Heart left ventricle (tissue), 16 donors: ENCODE measurements at regions of chr10 and their contacts with region 1.

Region 1: GRCh38 chr10:86945361-86946212 is 11.8 kb downstream of the MMRN2 start:
- DNase-seq: peak in 2 of 5 donors; percentile 11 to 22
- ATAC-seq: peak; percentile 11 to 40 (median 37)
- H3K4me3 ChIP-seq: no peak overlapping the region
- H3K27ac ChIP-seq: peak overlapping the region in 1 of 12 donors; percentile 19
- H3K4me1 ChIP-seq: peaks cover 0 to 53% (median 22%) of the 10 kb centered on the region in 12 donors
- H3K27me3 ChIP-seq: peaks cover 0 to 5% (median 0%) of the 10 kb centered on the region in 9 donors
- CTCF ChIP-seq: peak in 7 of 12 donors; percentile 22 to 51 (median 35)
- POLR2A ChIP-seq: no peak

Region 2: DNA sequence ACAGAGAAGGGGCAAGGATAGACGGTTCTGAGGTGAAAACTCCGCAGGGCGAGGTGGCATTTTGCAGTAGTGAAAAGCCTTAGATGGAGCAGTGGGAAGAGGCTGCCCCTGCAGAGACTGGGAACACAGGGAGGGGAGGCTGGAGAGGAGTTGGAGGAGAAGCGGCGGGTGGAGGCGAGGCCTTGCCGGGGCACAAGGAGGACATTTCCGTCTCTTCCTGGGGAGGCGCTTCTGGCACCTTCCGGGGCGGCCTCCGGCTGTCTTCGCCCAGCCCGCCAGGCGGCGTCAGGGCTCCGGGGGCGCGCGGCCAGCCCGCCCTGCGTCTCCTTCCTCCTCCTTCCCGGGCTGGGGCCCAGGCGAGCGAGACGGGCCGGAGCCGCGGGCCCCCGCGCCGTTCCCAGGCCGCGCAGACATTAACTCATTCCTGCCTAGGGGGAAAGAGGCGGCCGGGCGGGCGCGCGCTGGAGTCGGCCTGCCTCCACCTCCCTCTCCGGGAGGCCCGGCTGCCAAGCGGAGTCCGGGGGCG is 234.5 kb before region 1 on chr10:
- intact Hi-C with region 1: no loop called
- DNase-seq: peak; percentile 89 to 95 (median 89)
- ATAC-seq: peak; percentile 5 to 70 (median 65)
- H3K4me3 ChIP-seq: peak overlapping the region; percentile 40 to 84 (median 67)
- H3K27ac ChIP-seq: peak overlapping the region; percentile 64 to 98 (median 90)
- H3K4me1 ChIP-seq: peaks cover 4 to 81% (median 22%) of the 10 kb centered on the region in 12 donors
- H3K27me3 ChIP-seq: peaks cover 0 to 10% (median 0%) of the 10 kb centered on the region in 9 donors
- CTCF ChIP-seq: peak; percentile 63 to 93 (median 82)
- POLR2A ChIP-seq: peak in 1 of 2 donors; percentile 68

Region 3: DNA sequence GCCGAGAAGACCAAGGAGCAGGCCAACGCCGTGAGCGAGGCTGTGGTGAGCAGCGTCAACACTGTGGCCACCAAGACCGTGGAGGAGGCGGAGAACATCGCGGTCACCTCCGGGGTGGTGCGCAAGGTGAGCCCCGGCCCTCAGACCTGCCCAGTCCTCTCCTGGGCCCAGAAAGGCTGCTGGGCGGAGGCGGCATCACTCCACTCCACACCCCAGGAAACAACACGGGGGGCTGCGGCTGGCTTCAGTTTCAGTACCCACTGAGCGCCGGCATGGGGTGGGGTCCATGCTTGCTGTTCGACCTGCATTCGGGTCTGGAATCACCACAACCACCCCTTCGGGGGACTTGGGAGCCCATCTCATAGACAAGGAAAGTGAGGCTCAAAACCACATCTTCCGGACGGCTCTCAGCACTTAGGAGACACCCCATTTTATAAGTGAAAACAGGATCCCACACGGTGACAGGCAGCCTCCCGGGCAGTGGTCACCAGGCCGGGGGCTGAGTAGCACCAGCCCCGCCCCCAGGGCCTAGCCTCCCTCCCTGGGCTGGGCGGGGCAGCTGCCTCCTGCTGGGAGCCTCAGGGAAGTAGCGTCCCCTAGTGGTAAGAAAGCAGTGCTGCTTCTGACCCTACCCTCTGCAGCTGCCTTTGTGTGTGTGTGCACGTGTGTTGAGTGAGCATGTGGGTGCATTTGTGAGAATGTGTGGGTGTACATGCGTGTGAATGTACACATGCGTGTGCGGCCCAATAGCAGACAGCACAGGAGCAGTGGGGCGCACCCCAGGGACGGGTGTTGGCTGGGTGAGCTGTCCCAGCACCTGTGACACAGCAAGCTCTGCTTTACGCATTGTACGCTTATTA is 14.6 kb after region 1 on chr10:
- intact Hi-C with region 1: loop called in 1 of 10 experiments (anchors 2 kb)
- DNase-seq: peak; percentile 60 to 70 (median 63)
- ATAC-seq: peak; percentile 17 to 66 (median 50)
- H3K4me3 ChIP-seq: peak overlapping the region in 11 of 12 donors; percentile 0 to 66 (median 58)
- H3K27ac ChIP-seq: peak overlapping the region; percentile 75 to 98 (median 90)
- H3K4me1 ChIP-seq: peaks cover 4 to 48% (median 36%) of the 10 kb centered on the region in 12 donors
- H3K27me3 ChIP-seq: no peaks in the 10 kb centered on the region
- CTCF ChIP-seq: peak; percentile 88 to 95 (median 92)
- POLR2A ChIP-seq: no peak

Region 4: GRCh38 chr10:86965986-86966654 is 20.5 kb after region 1 on chr10:
- intact Hi-C with region 1: loop called in 2 of 10 experiments (anchors 1 to 2 kb)
- DNase-seq: no peak
- ATAC-seq: no peak
- H3K4me3 ChIP-seq: peak overlapping the region in 7 of 12 donors; percentile 1 to 37 (median 17)
- H3K27ac ChIP-seq: peak overlapping the region in 8 of 12 donors; percentile 12 to 63 (median 42)
- H3K4me1 ChIP-seq: peaks cover 2 to 62% (median 39%) of the 10 kb centered on the region in 12 donors
- H3K27me3 ChIP-seq: peaks cover 0 to 11% (median 0%) of the 10 kb centered on the region in 9 donors
- CTCF ChIP-seq: no peak
- POLR2A ChIP-seq: no peak